Activated CD4-positive, alpha-beta T cell treated with anti-CD3 and anti-CD28 coated beads, Interleukin-2, amount 10 ng/mL, durations not matched to agents 24 days and 14 days (primary cell): ENCODE measurements at regions of chr2 and their contacts with region 1.

Region 1: GRCh38 chr2:12430407-12431133 is 286.2 kb upstream of the TRIB2 start:
- DNase-seq: peak; percentile 75
- H3K4me3 Mint-ChIP-seq: peak overlapping the region; percentile 50
- H3K27ac Mint-ChIP-seq: peak overlapping the region; percentile 38
- H3K4me1 Mint-ChIP-seq: peaks cover 23% of the 10 kb centered on the region
- H3K27me3 Mint-ChIP-seq: no peaks in the 10 kb centered on the region

Region 2: GRCh38 chr2:12416600-12416999 is 14.0 kb before region 1 on chr2:
- intact Hi-C with region 1: loop called (anchors 2 kb)
- DNase-seq: peak; percentile 86
- H3K4me3 Mint-ChIP-seq: peak overlapping the region; percentile 4
- H3K27ac Mint-ChIP-seq: peak overlapping the region; percentile 25
- H3K4me1 Mint-ChIP-seq: peaks cover 54% of the 10 kb centered on the region
- H3K27me3 Mint-ChIP-seq: no peaks in the 10 kb centered on the region

Region 3: GRCh38 chr2:12456293-12457151 is 26.0 kb after region 1 on chr2:
- intact Hi-C with region 1: loop called (anchors 2 kb)
- DNase-seq: peak; percentile 85
- H3K4me3 Mint-ChIP-seq: peak overlapping the region; percentile 78
- H3K27ac Mint-ChIP-seq: peak overlapping the region; percentile 82
- H3K4me1 Mint-ChIP-seq: peaks cover 30% of the 10 kb centered on the region
- H3K27me3 Mint-ChIP-seq: no peaks in the 10 kb centered on the region

Region 4: GRCh38 chr2:12507295-12507694 is 76.7 kb after region 1 on chr2:
- intact Hi-C with region 1: loop called (anchors 2 kb)
- DNase-seq: peak; percentile 76
- H3K4me3 Mint-ChIP-seq: peak overlapping the region; percentile 57
- H3K27ac Mint-ChIP-seq: peak overlapping the region; percentile 43
- H3K4me1 Mint-ChIP-seq: peaks cover 62% of the 10 kb centered on the region
- H3K27me3 Mint-ChIP-seq: no peaks in the 10 kb centered on the region

Region 5: DNA sequence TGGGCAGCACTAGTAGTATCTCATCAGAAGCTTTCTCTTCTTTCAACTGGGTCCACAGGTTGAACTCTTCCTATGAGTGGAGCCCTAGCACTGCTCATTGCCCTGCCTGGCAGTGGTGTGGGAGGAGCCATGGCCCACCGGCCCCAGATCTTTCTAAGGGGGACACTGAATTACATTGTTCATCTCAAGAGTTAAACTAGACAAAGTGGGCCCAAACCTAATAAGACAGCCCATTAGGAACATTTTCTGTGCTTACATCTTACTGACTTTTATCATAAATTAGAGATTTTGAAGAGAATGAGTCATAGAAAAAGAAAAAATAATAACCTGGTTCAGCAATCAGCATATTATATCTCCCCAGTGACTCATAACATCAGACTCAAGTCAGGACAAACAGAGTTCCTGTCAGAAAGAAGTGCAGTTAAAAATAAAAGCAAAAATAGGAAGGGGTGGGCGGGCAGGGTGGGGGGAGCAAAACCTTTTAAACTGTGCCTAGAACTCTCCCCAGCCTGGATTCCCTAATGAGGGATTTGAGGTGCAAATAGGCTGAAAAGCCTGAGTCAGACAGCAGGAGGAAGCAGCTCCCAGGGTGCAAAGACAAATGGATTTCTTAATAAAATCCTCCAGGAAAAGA is 124.6 kb after region 1 on chr2:
- intact Hi-C with region 1: loop called (anchors 1 kb)
- DNase-seq: peak; percentile 59
- H3K4me3 Mint-ChIP-seq: peak overlapping the region; percentile 57
- H3K27ac Mint-ChIP-seq: peak overlapping the region; percentile 88
- H3K4me1 Mint-ChIP-seq: peaks cover 39% of the 10 kb centered on the region
- H3K27me3 Mint-ChIP-seq: no peaks in the 10 kb centered on the region

Region 6: DNA sequence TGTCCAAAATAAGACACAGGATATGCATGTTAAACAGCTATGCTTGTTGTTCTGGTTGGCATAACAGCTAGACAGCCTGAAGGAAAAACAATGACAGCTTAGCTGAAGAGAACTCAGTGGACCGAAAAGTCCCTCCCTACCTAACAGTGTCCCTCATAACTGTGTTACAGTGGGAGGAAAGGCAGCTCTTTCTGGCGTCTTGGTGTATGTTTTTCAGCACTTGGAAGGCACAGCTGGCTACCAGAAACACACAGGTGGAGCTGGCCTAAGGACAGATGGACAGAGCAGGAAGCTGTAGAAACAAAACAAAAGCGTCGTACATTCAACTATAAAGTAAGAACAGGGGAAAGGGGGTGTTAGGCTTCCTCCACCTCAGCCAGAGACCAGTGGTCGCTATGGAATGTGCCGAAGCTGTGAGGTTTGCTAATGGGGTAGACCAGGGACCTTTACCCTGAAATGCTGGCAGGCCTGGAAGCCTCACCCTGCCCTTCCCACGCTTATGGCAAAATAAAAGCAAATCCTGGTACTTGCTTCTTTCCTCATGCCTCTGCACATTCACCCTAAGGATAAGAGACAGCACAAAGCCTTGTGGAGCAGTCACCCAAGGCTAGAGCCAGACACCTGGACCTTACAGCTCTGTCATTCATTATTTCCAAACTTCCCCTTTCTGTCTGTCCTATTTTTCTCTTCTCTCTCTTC is 182.7 kb after region 1 on chr2:
- intact Hi-C with region 1: no loop called
- DNase-seq: no peak
- H3K4me3 Mint-ChIP-seq: no peak overlapping the region
- H3K27ac Mint-ChIP-seq: no peak overlapping the region
- H3K4me1 Mint-ChIP-seq: peaks cover 8% of the 10 kb centered on the region
- H3K27me3 Mint-ChIP-seq: peaks cover 5% of the 10 kb centered on the region